OCI-LY7 (cell line): ENCODE measurements at regions of chr19 and their contacts with region 1.

Region 1: DNA sequence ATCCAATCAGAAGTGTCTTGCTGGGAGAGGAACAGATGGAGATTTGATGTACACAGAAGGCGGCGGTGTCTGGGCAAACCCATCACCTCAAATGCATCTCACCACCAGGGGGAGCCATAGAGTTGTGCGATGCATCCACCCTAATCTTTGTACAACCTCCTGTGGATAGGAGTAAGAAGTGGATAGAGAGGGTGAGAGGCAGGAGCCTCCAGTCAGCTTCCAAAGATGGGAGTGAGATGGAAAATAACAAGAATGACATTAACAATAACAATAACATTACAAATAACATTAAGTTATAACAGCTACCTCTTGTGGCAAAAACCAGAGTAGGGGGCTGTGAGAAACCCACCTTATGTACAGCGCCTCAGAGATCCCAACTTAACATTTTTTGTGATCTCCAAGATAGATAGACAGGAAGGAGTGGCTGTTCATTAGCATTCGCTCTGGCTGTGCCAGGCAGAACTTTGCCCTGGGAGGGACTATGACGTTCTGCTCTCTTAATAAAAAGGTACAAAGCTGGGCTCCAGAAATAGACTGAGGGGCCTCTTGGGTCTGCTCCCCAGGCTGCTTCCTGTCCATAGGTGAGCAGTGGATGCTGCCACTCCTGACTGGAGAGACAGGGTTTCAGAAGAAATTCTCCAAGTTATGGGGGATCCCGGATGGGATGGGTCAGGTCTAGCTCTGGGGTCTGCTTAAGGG is 5.2 kb upstream of the CEACAM18 start:
- DNase-seq: peak; percentile 76
- H3K4me3 ChIP-seq: no peak overlapping the region
- H3K27ac ChIP-seq: no peak overlapping the region
- H3K4me1 ChIP-seq: no peaks in the 10 kb centered on the region
- CTCF ChIP-seq: peak; percentile 91

Region 2: GRCh38 chr19:51393959-51394836 is 79.0 kb before region 1 on chr19:
- CTCF ChIA-PET with region 1: no interaction called
- POLR2A ChIA-PET with region 1: no interaction called
- intact Hi-C with region 1: no loop called
- DNase-seq: peak; percentile 100
- H3K4me3 ChIP-seq: peak overlapping the region; percentile 85
- H3K27ac ChIP-seq: peak overlapping the region; percentile 93
- H3K4me1 ChIP-seq: peaks cover 30% of the 10 kb centered on the region
- CTCF ChIP-seq: peak; percentile 30; the same call in 1 of the 2 replicates

Region 3: DNA sequence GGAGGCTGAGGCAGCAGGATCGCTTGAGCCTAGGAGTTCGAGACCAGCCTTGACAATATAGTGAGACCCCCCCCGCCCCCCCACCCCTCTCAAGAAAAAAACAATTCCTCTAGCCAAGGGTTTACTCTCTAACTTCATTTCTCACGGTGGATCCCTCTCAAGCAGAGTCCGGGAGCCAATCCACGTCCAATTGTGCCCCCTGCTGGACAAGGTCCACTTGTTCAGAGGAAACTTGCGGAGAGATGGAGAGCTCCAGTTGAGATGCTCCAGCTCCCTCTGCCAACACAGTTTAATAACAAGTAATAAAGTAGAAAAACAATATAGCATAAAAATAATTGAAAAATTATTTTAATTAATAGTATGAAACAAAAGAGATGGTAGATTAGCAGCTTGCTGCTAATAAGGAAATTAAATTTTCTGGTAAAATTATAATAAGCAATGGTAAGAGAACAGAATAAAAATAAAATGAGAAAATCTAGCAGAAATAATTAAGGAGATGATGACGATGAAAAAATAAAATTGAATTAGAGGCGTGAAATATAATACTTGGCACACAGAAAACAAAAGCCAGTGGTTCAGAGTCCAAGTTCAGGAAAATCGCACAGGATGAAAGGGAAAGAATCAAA is 187.9 kb after region 1 on chr19:
- CTCF ChIA-PET with region 1: interaction called, 9 read pairs
- POLR2A ChIA-PET with region 1: interaction called, 3 read pairs
- intact Hi-C with region 1: loop called (anchors 1 kb)
- DNase-seq: peak; percentile 76
- H3K4me3 ChIP-seq: no peak overlapping the region
- H3K27ac ChIP-seq: no peak overlapping the region
- H3K4me1 ChIP-seq: peaks cover 4% of the 10 kb centered on the region
- CTCF ChIP-seq: peak; percentile 74